Esophagus muscularis mucosa (tissue), 4 donors: ENCODE measurements at regions of chr5 and their contacts with region 1.

Region 1: GRCh38 chr5:150272526-150272925 is 17.0 kb downstream of the CAMK2A start:
- DNase-seq: no peak
- H3K4me3 ChIP-seq: no peak overlapping the region
- H3K27ac ChIP-seq: no peak overlapping the region
- H3K4me1 ChIP-seq: peaks cover 0 to 15% (median 15%) of the 10 kb centered on the region in 4 donors
- H3K27me3 ChIP-seq: no peaks in the 10 kb centered on the region
- CTCF ChIP-seq: peak in 2 of 3 experiments; percentile 20
- EP300 ChIP-seq: no peak
- POLR2A ChIP-seq: no peak

Region 2: GRCh38 chr5:150175076-150175935 is 97.2 kb before region 1 on chr5:
- intact Hi-C with region 1: no loop called
- DNase-seq: no peak
- H3K4me3 ChIP-seq: no peak overlapping the region
- H3K27ac ChIP-seq: no peak overlapping the region
- H3K4me1 ChIP-seq: peaks cover 7 to 17% (median 11%) of the 10 kb centered on the region in 4 donors
- H3K27me3 ChIP-seq: peaks cover 0 to 3% (median 0%) of the 10 kb centered on the region in 4 donors
- CTCF ChIP-seq: peak in 2 of 3 experiments; percentile 20 to 38
- EP300 ChIP-seq: no peak
- POLR2A ChIP-seq: no peak

Region 3: GRCh38 chr5:150350524-150351344 is 78.2 kb after region 1 on chr5:
- intact Hi-C with region 1: loop called (anchors 5 kb)
- DNase-seq: peak; percentile 94
- H3K4me3 ChIP-seq: no peak overlapping the region
- H3K27ac ChIP-seq: peak overlapping the region in 2 of 4 donors; percentile 14 to 25
- H3K4me1 ChIP-seq: peaks cover 0 to 14% (median 10%) of the 10 kb centered on the region in 4 donors
- H3K27me3 ChIP-seq: no peaks in the 10 kb centered on the region
- CTCF ChIP-seq: peak; percentile 54 to 69 (median 60)
- EP300 ChIP-seq: no peak
- POLR2A ChIP-seq: no peak

Region 4: DNA sequence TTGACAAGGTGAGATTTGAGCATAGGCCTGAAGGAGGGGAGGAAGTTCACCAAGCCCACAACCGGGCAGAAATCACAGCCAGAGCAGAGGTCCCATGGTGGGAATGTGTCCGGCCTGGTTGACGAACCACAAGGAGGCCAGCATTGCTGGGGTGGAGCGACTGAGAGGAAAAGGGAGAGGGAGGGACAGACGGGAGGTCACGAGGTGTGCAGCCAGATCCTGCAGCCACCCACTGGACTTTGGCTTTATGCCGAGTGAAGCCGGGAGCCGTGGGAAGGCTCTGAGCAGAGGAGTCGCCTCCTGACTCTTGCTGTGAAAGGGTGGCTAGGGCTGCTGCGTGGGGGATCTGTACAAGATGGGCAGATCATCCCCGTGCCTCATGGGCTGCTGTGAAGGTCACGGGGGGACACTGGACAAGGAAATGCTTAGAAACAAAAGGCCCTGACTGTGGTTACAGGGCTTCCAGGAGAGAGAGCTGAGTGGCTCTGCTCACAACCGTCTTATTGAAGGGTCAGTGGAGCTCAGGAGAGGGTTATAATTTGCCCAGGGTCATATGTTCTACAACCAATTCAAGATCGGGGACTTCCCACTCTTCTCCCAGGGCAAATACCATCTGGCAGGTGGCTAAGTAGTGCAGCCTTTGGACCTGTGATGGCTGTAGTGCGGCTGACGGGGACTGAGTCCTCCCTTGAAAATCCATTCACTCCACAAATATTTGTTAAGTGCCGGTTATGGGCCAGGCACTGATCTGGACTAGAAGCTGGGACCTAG is 155.8 kb after region 1 on chr5:
- intact Hi-C with region 1: no loop called
- DNase-seq: no peak
- H3K4me3 ChIP-seq: no peak overlapping the region
- H3K27ac ChIP-seq: peak overlapping the region in 2 of 4 donors; percentile 23 to 25
- H3K4me1 ChIP-seq: peaks cover 6 to 9% (median 8%) of the 10 kb centered on the region in 4 donors
- H3K27me3 ChIP-seq: no peaks in the 10 kb centered on the region
- CTCF ChIP-seq: no peak
- EP300 ChIP-seq: no peak
- POLR2A ChIP-seq: no peak